ENCODE measurements at regions of chr1 and their contacts with region 1.

Region 1: GRCh38 chr1:7646981-7647901 is 123.9 kb upstream of the VAMP3 start:
- DNase-seq: peak; percentile 78
- H3K4me3 Mint-ChIP-seq: no peak overlapping the region
- H3K27ac Mint-ChIP-seq: no peak overlapping the region
- H3K4me1 Mint-ChIP-seq: no peaks in the 10 kb centered on the region
- H3K27me3 Mint-ChIP-seq: peaks cover 27% of the 10 kb centered on the region
- CTCF ChIP-seq: peak; percentile 90

Region 2: DNA sequence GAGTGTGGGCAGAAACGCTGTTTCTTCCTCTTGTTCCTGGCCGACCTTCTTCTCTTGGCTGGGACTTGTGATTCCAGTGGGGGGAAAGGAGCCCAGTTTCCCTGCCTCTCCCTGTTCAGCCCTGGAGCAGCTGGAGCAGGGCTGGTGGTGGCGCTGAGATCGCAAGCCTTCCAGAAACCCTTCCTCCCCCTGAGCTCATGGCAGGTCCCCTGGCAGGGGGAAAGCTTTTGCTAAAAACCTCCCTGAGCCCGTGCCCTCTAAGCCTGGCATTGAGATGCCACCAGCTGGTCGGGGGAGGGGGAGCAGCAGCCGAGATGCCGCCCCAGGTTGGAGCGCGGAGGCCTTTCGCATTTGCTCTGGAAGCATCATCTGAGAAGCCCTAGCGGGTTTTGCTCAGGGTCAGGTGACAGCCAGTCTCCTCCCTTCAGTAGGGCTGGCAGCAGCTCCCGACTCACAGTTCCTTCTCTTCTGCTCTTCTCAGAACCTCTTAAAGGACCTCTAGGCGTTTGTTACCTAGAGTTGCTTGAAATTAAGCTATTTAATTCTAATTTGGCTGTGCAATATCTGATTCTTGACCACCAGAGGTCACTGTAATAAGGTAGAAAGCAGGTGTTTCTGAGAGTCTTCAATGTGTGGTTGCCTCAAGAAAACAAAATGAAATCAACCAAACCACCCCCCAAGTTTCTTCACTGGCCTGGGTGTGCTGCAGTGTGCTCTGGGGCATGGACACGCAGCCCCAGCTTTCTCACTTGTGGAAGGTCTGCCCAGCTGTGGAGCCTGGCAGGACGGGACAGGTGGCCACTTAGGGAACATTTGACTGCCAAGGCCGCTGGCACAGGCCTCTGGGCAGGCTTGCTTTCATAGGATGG is 604.7 kb before region 1 on chr1:
- CTCF ChIA-PET with region 1: interaction called, 6 read pairs
- intact Hi-C with region 1: loop called (anchors 5 kb)
- DNase-seq: no peak
- H3K4me3 Mint-ChIP-seq: no peak overlapping the region
- H3K27ac Mint-ChIP-seq: no peak overlapping the region
- H3K4me1 Mint-ChIP-seq: no peaks in the 10 kb centered on the region
- H3K27me3 Mint-ChIP-seq: peaks cover 46% of the 10 kb centered on the region
- CTCF ChIP-seq: no peak

Region 3: DNA sequence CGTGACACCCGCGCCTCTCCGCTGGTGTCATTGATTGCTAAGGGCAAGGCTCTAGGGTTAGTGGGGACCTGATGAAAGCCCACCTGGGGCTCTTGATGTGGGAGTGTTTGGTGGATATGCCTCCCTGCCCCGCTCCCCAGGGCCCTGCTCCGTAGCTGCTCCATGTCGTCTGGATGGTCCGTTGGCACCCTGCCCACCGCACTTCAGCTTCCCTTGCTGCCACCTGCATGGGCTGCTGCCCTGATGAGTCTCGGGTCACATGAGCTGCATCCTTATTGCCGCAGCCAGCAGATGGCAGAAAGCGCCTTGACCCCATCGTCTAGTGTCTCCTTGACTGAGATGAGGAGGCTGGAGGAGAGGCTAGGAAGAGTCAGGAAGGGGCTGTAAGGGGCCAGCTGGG is 422.6 kb before region 1 on chr1:
- CTCF ChIA-PET with region 1: no interaction called
- intact Hi-C with region 1: loop called (anchors 5 kb)
- DNase-seq: no peak
- H3K4me3 Mint-ChIP-seq: no peak overlapping the region
- H3K27ac Mint-ChIP-seq: no peak overlapping the region
- H3K4me1 Mint-ChIP-seq: no peaks in the 10 kb centered on the region
- H3K27me3 Mint-ChIP-seq: peaks cover 10% of the 10 kb centered on the region
- CTCF ChIP-seq: no peak

Region 4: GRCh38 chr1:7454052-7454815 is 193.0 kb before region 1 on chr1:
- CTCF ChIA-PET with region 1: interaction called, 6 read pairs
- intact Hi-C with region 1: loop called (anchors 1 kb)
- DNase-seq: peak; percentile 48
- H3K4me3 Mint-ChIP-seq: no peak overlapping the region
- H3K27ac Mint-ChIP-seq: no peak overlapping the region
- H3K4me1 Mint-ChIP-seq: no peaks in the 10 kb centered on the region
- H3K27me3 Mint-ChIP-seq: peaks cover 13% of the 10 kb centered on the region
- CTCF ChIP-seq: peak; percentile 34